PC-3 (cell line): ENCODE measurements at regions of chr11 and their contacts with region 1.

Region 1: GRCh38 chr11:86938900-86939880 is 16.0 kb downstream of the FZD4 start:
- DNase-seq: peak; percentile 83
- ATAC-seq: no peak
- H3K4me3 ChIP-seq: peak overlapping the region; percentile 23; the same call in 1 of the 2 replicates
- H3K27ac ChIP-seq: peak overlapping the region; percentile 88
- H3K4me1 ChIP-seq: peaks cover 60% of the 10 kb centered on the region
- H3K27me3 ChIP-seq: no peaks in the 10 kb centered on the region
- CTCF ChIP-seq: peak; percentile 71

Region 2: GRCh38 chr11:86784241-86784681 is 154.9 kb before region 1 on chr11:
- CTCF ChIA-PET with region 1: no interaction called
- POLR2A ChIA-PET with region 1: no interaction called
- intact Hi-C with region 1: no loop called
- DNase-seq: peak; percentile 8
- ATAC-seq: peak; percentile 72; the same call in 1 of the 2 replicates
- H3K4me3 ChIP-seq: no peak overlapping the region
- H3K27ac ChIP-seq: no peak overlapping the region
- H3K4me1 ChIP-seq: no peaks in the 10 kb centered on the region; the same call in 1 of the 2 replicates
- H3K27me3 ChIP-seq: no peaks in the 10 kb centered on the region
- CTCF ChIP-seq: no peak

Region 3: GRCh38 chr11:86955361-86956120 is 16.4 kb after region 1 on chr11 and contains the start of gene FZD4:
- CTCF ChIA-PET with region 1: interaction called, 9 read pairs
- POLR2A ChIA-PET with region 1: interaction called, 6 read pairs
- intact Hi-C with region 1: loop called (anchors 2 kb)
- DNase-seq: peak; percentile 94
- ATAC-seq: peak; percentile 89
- H3K4me3 ChIP-seq: peak within 1 kb of the TSS; percentile 96
- H3K27ac ChIP-seq: peak within 1 kb of the TSS; percentile 71
- H3K4me1 ChIP-seq: peaks cover 35% of the 10 kb centered on the region
- H3K27me3 ChIP-seq: no peaks in the 10 kb centered on the region
- CTCF ChIP-seq: peak; percentile 47; the same call in 1 of the 2 replicates
- total RNA-seq, gene FZD4: 17.3 and 17.7 TPM in 2 replicates

Region 4: GRCh38 chr11:86978756-86979608 is 39.8 kb after region 1 on chr11:
- CTCF ChIA-PET with region 1: no interaction called
- POLR2A ChIA-PET with region 1: no interaction called
- intact Hi-C with region 1: loop called (anchors 1 kb)
- DNase-seq: peak; percentile 71
- ATAC-seq: peak; percentile 99
- H3K4me3 ChIP-seq: no peak overlapping the region
- H3K27ac ChIP-seq: no peak overlapping the region
- H3K4me1 ChIP-seq: peaks cover 4% of the 10 kb centered on the region; the same call in 1 of the 2 replicates
- H3K27me3 ChIP-seq: no peaks in the 10 kb centered on the region
- CTCF ChIP-seq: peak; percentile 95

Region 5: GRCh38 chr11:87097582-87097981 is 158.4 kb after region 1 on chr11:
- CTCF ChIA-PET with region 1: interaction called, 4 read pairs
- POLR2A ChIA-PET with region 1: no interaction called
- intact Hi-C with region 1: loop called (anchors 5 kb)
- DNase-seq: peak; percentile 76
- ATAC-seq: peak; percentile 79; the same call in 1 of the 2 replicates
- H3K4me3 ChIP-seq: no peak overlapping the region
- H3K27ac ChIP-seq: no peak overlapping the region
- H3K4me1 ChIP-seq: no peaks in the 10 kb centered on the region
- H3K27me3 ChIP-seq: no peaks in the 10 kb centered on the region
- CTCF ChIP-seq: peak; percentile 94

Region 6: DNA sequence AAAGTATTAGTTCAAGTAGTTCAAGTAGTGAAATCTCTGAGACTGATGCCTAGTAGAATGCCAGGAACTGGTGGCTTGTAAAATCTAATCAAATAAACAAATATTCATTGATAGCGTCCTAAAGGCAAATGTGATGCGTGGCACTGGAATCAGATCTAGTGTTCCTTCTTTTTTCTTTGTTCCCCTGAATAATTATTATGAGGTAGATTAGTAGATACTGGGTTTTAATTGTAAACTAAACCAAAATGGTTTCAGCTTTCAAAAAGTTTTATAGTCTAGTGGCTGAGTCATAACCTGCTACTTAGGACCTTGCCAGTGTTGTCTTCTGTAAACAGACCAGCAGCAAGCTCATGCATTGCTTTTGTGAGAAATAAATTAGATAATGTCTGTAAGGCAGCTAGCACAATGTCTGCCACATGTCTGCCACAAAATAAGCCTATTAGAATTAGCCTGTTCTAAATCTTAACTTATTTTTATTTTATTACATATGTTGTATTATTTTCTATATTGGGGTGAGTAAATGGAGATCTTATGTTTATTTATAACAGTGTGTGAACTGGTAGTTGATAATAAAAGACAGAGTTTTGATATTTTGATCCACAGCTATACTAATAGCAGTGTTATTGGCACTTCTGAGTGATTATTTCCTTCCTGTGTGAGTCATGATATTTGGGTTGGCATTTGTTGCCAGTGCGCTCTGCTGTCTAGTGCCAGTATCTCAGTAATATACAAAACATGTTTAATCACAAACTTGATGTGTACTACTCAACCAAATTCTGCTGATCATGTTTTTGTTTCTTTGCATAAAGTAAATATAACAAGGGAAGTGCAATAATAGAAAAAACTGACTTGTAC is 234.2 kb after region 1 on chr11:
- CTCF ChIA-PET with region 1: no interaction called
- POLR2A ChIA-PET with region 1: no interaction called
- intact Hi-C with region 1: loop called (anchors 5 kb)
- DNase-seq: peak; percentile 87
- ATAC-seq: peak; percentile 95
- H3K4me3 ChIP-seq: 0 out of 2 replicates have a peak overlapping the region, but pooled peaks have one; percentile 20
- H3K27ac ChIP-seq: peak overlapping the region; percentile 80
- H3K4me1 ChIP-seq: peaks cover 27% of the 10 kb centered on the region
- H3K27me3 ChIP-seq: no peaks in the 10 kb centered on the region
- CTCF ChIP-seq: no peak

Region 7: GRCh38 chr11:87185228-87185627 is 246.0 kb after region 1 on chr11:
- CTCF ChIA-PET with region 1: no interaction called
- POLR2A ChIA-PET with region 1: no interaction called
- intact Hi-C with region 1: no loop called
- DNase-seq: no peak
- ATAC-seq: no peak
- H3K4me3 ChIP-seq: no peak overlapping the region
- H3K27ac ChIP-seq: no peak overlapping the region
- H3K4me1 ChIP-seq: no peaks in the 10 kb centered on the region
- H3K27me3 ChIP-seq: no peaks in the 10 kb centered on the region
- CTCF ChIP-seq: no peak

Region 8: DNA sequence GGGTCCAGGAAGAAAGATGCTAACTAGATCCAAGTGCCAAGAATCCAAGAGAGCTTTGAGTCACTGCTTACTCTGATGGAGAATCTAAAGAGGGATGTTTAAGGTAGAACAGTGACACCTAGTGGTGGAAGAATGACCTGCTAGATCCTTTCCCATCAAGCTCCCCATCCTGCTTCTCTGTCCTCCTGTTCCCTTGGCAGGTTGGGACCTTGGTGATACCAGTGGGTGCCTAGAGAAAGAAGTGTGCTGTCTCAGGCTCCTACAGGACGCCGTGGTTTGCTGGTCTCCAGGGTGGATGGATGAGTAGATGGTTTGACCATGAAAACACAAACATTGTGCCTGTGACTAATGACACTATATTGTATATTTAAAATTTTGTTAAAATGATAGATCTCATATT is 482.2 kb after region 1 on chr11:
- CTCF ChIA-PET with region 1: no interaction called
- POLR2A ChIA-PET with region 1: no interaction called
- intact Hi-C with region 1: loop called (anchors 5 kb)
- DNase-seq: peak; percentile 97
- ATAC-seq: peak; percentile 57
- H3K4me3 ChIP-seq: no peak overlapping the region
- H3K27ac ChIP-seq: peak overlapping the region; percentile 93
- H3K4me1 ChIP-seq: peaks cover 65% of the 10 kb centered on the region
- H3K27me3 ChIP-seq: no peaks in the 10 kb centered on the region
- CTCF ChIP-seq: peak; percentile 89